WTC11 (cell line): ENCODE measurements at regions of chr3 and their contacts with region 1.

Region 1: DNA sequence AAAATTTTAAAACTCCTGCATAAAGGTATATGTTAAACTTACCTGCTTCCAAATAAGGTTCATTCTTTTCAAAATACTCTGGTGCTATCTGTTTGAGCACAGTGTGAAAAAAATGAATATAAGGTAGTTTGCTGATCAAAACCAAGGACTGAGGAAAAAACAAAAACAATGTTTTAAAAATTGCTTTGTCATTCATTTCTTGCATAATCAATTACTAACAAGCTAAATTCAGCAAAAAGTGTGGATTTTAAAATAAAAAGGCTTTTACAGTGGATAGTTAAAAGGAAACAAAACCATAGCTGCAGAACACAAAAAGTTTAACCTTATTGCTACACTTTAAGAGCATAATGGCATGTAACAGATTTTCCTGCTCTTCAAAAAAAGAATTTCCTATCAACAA is 31.5 kb downstream of the DENND6A start:
- DNase-seq: no peak
- ATAC-seq: no peak
- H3K4me3 Mint-ChIP-seq: no peak overlapping the region
- H3K27ac Mint-ChIP-seq: no peak overlapping the region
- H3K4me1 Mint-ChIP-seq: peaks cover 12% of the 10 kb centered on the region
- H3K27me3 Mint-ChIP-seq: no peaks in the 10 kb centered on the region
- CTCF ChIP-seq: no peak

Region 2: DNA sequence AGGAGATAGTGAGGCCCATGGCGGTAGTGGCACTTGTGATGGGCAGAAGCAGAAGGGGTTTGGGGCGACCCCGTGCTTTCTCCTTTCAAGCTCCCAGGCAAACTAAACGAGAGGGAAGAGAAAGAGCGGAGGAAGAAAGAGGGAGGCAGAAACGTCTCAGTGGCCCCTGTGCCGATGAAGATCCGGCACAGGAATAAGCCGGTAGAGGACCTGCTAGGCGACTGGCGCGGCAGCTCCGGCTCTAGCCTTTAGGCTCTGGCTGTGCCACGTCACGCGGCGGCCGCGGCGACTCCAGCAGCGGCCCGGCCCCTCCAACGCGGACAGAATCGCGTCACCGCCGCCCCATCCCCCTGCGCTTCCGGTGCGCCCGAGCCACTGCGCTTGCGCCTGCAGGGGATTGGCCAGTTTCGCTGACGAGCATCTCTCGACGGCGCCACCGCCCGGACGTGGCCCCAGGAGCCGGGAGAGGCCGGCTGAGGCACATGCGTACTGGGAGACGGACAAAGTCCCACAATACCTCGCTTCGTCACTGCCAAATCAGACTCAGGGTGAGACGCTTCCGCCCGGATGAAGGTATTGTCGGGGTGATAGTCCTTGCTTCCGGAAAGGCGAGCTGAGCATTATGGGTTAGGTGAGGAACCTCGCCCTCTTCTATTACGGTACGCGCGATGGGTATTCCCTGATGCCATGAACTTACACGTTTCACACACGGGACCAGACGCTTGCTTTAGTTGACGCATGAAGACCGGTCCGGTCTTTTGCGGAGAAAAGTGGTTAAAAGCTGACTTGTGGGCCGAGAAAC is 64.1 kb before region 1 on chr3 and contains the start of gene ARF4:
- CTCF ChIA-PET with region 1: no interaction called
- POLR2A ChIA-PET with region 1: interaction called, 11 read pairs
- DNase-seq: peak; percentile 99
- ATAC-seq: peak; percentile 96
- H3K4me3 Mint-ChIP-seq: peak within 1 kb of the TSS; percentile 99
- H3K27ac Mint-ChIP-seq: peak within 1 kb of the TSS; percentile 100
- H3K4me1 Mint-ChIP-seq: peaks cover 23% of the 10 kb centered on the region
- H3K27me3 Mint-ChIP-seq: no peaks in the 10 kb centered on the region
- CTCF ChIP-seq: no peak
- total RNA-seq, gene ARF4: 117 to 118 TPM (median 117 TPM) in 3 replicates